Heart left ventricle (tissue), 16 donors: ENCODE measurements at regions of chr18 and their contacts with region 1.

Region 1: DNA sequence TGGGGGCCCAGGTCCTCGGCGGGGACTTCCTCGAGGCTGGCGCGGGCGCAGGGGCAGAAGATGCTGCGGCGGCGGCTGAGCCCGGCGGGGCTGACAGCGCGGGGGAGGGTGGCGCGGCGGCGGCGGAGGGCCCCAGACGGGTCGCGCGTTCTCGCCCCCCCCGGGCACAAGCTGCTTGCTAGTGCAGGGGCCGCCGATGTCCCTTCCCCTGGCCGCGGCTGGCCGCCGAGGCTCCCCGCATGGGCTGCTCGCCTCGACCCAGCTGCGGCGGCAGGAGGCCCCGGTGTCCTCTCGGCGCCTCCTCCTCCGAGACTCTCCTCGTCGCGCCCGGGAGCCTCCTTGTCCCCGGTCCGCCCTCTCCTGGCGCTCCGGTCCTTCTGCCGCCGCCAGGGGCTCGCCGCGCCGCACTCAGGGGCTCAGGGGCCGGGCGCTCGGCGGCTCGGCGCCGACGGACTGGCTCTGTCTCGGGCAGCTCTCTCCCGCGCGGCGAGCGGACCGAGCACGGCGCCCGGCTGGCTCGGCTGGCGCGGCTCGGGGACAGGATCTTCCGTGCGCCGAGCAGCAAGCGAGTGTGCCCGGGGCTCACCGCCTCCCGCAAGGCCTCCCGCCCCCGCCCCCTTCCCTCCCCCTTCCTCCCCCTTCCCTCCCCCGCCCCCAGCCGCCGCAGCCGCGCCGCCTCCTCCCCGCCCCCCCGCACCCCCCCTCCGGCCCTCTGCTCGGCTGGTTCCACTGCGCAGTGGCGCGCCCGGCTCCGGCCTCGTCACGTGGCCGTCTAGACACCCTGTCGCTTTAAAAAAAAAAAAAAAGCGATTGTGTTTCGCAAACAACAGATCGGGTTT is 902 bp upstream of the SMAD7 start:
- DNase-seq: peak; percentile 91 to 95 (median 91)
- ATAC-seq: peak; percentile 74 to 85 (median 77)
- H3K4me3 ChIP-seq: peak overlapping the region; percentile 72 to 98 (median 90)
- H3K27ac ChIP-seq: peak overlapping the region; percentile 95 to 100 (median 98)
- H3K4me1 ChIP-seq: peaks cover under 1 to 57% (median 39%) of the 10 kb centered on the region in 12 donors
- H3K27me3 ChIP-seq: peaks cover 0 to 6% (median 0%) of the 10 kb centered on the region in 9 donors
- CTCF ChIP-seq: peak in 6 of 12 donors; percentile 14 to 54 (median 32)
- POLR2A ChIP-seq: peak in 1 of 2 donors; percentile 87

Region 2: DNA sequence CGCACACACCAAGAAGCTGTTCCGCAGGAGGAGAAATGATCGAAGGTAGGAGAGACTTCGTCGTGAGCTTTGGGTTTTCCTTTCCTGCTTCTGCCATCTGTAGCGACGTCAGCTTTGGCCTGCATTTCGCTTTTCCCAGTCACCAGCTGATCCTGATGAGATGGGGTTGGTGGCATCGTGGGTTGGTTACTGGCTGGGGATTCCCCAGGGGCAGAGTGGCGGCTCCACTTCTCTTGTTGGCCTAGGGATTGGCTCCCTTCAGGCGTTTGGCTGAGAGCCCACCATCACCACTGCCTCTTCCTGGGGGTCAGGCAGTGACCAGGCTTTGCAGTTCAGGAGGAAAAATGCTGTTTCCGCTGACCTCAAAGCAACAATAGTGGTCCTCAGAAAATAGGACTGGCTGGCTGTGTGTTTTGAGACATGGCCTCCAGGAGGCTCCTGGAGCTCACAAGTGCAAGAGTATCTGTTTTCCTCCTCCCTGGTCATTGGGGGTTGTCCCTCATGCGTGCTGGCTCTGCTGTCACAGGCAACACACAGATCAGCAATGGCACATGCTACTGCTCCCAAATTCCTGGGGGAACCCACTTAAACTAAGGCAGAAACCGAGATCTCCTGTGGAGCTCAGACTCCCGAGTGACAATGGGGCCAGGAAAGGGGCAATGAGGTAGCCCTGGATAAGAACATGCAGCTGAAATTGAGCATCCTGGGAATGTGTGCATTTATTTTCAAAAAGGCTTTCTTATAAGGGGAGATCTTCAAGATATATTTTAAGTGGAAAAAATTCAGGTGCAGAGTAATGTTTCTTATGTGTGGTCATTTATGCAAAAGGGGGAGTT is 239.8 kb before region 1 on chr18:
- intact Hi-C with region 1: loop called in 4 of 10 experiments (anchors 2 to 5 kb)
- DNase-seq: peak; percentile 44 to 67 (median 59)
- ATAC-seq: peak in 3 of 4 donors; percentile 53 to 61 (median 60)
- H3K4me3 ChIP-seq: no peak overlapping the region
- H3K27ac ChIP-seq: peak overlapping the region in 7 of 12 donors; percentile 16 to 93 (median 64)
- H3K4me1 ChIP-seq: peaks cover 2 to 86% (median 49%) of the 10 kb centered on the region in 12 donors
- H3K27me3 ChIP-seq: no peaks in the 10 kb centered on the region
- CTCF ChIP-seq: peak; percentile 30 to 75 (median 60)
- POLR2A ChIP-seq: no peak

Region 3: GRCh38 chr18:48851599-48851960 is 100.1 kb before region 1 on chr18:
- intact Hi-C with region 1: loop called in 2 of 10 experiments (anchors 5 kb)
- DNase-seq: peak; percentile 79 to 83 (median 82)
- ATAC-seq: peak; percentile 52 to 83 (median 75)
- H3K4me3 ChIP-seq: peak overlapping the region in 3 of 12 donors; percentile 13 to 15 (median 14)
- H3K27ac ChIP-seq: peak overlapping the region; percentile 53 to 95 (median 88)
- H3K4me1 ChIP-seq: peaks cover 5 to 65% (median 43%) of the 10 kb centered on the region in 12 donors
- H3K27me3 ChIP-seq: no peaks in the 10 kb centered on the region
- CTCF ChIP-seq: no peak
- POLR2A ChIP-seq: no peak

Region 4: DNA sequence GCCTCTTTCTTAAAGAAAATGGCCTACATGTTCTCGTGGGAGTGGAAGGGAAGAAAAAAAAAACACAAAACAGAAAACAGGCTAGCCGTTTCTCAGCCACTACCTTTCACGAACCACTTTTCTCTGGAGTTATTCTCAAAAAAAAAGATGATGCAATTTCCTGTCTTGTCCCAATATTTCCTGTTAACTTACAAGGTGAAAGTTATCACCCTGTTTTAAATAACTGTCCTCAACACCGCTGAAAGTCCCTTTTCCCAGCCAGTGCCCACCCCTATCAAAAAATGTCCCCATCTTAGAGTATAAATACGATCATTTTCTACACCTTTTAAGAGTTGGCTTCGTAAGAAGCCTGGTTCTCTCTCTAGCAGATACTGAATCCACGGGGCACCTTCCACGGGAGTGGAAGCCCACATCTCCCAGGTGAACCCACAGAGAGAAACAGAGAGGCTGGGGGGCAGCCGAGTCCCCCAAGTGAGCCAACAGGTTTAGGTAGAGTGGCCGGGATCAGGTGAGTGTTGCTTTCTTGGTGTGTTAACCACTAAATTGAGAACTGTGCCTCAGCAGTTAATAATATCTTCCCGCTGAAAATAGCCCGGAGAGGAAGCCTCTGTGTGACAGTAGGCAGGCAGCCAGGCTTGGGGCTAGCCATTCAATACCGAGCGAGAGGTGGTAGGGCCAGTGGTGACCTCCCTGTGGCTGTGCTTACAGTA is 16.8 kb before region 1 on chr18:
- intact Hi-C with region 1: loop called in 2 of 10 experiments (anchors 2 kb)
- DNase-seq: peak; percentile 84 to 91 (median 86)
- ATAC-seq: peak; percentile 75 to 85 (median 80)
- H3K4me3 ChIP-seq: peak overlapping the region in 10 of 12 donors; percentile 11 to 48 (median 34)
- H3K27ac ChIP-seq: peak overlapping the region; percentile 17 to 96 (median 86)
- H3K4me1 ChIP-seq: peaks cover 34 to 98% (median 93%) of the 10 kb centered on the region in 12 donors
- H3K27me3 ChIP-seq: no peaks in the 10 kb centered on the region
- CTCF ChIP-seq: no peak
- POLR2A ChIP-seq: no peak

Region 5: DNA sequence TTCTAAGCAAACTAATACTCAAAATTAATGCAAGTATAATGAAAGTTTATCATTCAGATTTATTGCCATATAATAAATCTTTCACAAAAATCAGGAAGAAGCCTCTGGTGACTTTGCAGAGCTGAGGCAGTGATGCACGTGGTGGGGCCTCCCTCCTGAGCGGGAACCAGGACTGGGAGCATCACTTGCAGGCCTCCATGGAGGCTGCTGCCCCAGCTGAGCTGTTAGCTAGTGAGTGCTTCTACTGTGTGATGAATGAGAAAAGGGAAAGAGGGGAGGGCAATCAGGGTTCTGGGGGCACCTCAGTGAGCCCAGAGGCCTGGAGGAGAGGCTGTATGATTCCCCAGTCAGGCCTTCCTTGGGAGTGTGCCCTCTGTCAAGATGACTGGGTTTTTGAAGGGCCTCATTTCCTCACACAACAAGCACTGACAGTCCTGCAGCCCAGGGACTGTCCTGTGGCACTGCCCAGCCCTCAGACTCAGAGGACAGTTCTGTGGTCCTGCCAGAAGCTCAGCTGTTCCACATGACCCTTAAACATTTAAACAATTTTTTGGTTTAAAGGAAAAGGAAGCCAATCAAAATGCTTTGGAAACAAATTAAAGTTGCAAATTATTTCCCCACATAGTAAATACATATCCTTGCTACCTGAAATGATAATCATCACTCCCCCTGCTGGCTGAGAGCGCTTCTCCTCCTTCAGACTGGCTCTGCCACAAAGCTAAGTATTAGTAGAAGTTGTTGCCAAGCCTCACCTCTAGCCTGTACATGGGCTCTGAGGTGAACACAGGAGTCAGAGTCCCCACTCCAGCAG is 90.0 kb after region 1 on chr18:
- intact Hi-C with region 1: loop called in 2 of 10 experiments (anchors 5 kb)
- DNase-seq: peak in 4 of 5 donors; percentile 40 to 64 (median 52)
- ATAC-seq: peak; percentile 58 to 81 (median 72)
- H3K4me3 ChIP-seq: no peak overlapping the region
- H3K27ac ChIP-seq: no peak overlapping the region
- H3K4me1 ChIP-seq: peaks cover 0 to 11% (median 0%) of the 10 kb centered on the region in 12 donors
- H3K27me3 ChIP-seq: no peaks in the 10 kb centered on the region
- CTCF ChIP-seq: peak; percentile 45 to 70 (median 61)
- POLR2A ChIP-seq: no peak